GM18951 (cell line): ENCODE measurements at regions of chr2 and their contacts with region 1.

Region 1: DNA sequence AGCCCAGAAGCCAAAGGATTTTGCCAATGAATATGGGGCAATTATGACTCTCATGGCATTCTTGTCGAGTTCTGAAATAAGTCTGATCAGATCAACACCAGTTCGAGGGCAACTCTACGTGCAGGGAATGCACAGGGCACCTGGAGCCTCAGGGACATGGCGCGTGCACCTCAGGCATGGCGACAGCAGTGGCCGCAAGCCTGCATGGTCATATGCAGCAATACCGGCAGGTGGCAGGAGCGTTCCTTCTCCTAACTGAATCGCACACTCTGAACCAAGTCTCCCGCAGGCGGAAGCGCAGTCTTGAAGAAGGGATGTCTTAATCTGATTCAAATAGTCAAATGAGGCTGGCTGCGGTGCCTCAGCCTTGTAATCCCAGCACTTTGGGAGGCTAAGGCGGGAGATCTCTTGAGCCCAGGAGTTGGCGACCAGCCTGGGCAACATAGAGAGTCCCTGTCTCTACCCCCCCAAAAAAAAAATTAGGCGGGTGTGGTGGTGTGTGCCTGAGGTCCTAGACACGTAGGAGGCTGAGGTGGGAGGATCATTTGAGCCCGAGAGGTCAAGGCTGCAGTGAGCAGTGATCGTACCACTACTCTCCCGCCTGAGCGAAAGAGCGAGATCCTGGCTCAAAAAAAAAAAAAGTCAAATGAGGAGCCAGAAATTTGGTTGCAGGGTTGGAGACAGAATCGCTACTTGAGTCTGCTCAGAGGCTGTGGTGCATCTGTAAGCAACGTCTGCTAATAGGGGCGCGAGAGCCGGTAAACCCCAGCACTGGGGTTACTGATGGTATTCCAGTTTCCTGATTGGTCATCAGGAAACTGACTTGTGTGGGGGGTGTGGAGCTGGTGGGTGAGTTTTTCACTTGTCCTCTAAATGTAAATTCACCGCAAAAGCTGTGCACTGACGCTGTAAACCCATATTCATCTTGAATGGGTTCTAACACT is 28.8 kb downstream of the FHL2 start:
- POLR2A ChIP-seq: no peak

Region 2: DNA sequence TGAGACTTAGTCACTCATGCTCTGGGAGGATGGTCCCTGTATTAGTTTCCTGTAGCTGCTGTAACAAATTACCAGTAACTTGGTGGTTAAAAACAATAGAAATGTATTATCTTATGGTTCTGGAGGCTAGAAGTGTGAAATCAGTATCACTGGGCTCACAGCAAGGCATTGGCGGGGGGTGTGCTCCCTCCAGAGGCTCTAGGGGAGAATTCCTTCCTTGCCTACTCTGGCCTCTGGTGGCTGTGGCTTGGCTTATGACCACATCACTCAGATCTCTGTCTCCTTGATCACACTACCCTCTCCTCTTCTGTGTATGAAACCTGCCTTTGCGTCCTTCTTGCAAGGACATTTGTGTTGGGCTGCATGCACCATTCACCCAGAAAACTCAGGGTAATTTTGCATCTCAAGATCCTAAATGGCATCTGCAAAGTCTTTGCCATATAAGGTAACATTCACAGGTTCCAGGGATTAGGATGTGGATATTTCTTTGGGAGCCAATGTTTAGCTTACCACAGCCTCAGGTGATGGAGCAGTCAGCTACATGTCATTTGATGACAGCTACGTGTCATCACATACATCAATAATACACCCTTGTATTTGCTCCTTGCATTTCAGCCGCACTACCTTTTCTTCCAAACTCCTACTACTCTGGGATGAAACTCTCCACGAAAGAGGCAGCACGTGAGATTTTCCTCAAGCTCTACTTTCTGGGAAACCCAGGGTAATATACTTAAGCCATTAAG is 565.7 kb before region 1 on chr2:
- in situ Hi-C with region 1: no loop called
- POLR2A ChIP-seq: no peak

Region 3: GRCh38 chr2:105521205-105521604 is 151.2 kb after region 1 on chr2:
- in situ Hi-C with region 1: loop called (anchors 5 kb)
- POLR2A ChIP-seq: no peak

Region 4: GRCh38 chr2:106642679-106643078 is 1272.7 kb after region 1 on chr2:
- in situ Hi-C with region 1: no loop called
- POLR2A ChIP-seq: no peak